ENCODE measurements at regions of chr6 and their contacts with region 1.

Region 1: DNA sequence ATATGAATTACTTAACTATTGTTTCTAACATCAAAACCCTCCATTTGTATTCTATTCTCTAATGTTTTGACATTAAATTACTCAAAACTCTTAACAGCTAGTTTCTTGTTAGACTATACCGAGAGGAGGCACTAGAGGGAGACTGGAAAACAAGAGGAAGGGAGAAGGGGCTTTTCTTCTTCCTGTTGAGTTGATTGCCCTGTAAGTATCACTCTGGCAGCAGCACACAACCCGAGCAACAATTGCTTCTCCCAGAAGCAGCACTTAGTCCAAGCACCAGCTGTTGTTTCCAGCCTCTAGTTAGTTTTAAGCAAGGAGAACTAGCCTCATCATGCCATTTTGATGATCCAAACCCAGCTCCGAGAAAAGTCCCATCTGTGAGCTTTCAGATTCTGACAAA is 603.8 kb downstream of the PRKN start:
- DNase-seq: peak in 1 of 3 donors; percentile 35
- H3K4me3 ChIP-seq: no peak overlapping the region
- H3K4me3 Mint-ChIP-seq: no peak overlapping the region
- H3K27ac ChIP-seq: no peak overlapping the region
- H3K27ac Mint-ChIP-seq: no peak overlapping the region
- H3K4me1 ChIP-seq: peaks cover 12 to 14% of the 10 kb centered on the region in 2 donors
- H3K4me1 Mint-ChIP-seq: peaks cover 12% of the 10 kb centered on the region
- H3K27me3 ChIP-seq: no peaks in the 10 kb centered on the region
- H3K27me3 Mint-ChIP-seq: peaks cover 0 to 1% (median 0%) of the 10 kb centered on the region in 3 donors
- CTCF ChIP-seq: peak; percentile 37

Region 2: GRCh38 chr6:162177746-162178145 is 53.9 kb after region 1 on chr6:
- intact Hi-C with region 1: loop called in 1 of 2 experiments (anchors 10 kb)
- DNase-seq: no peak
- H3K4me3 ChIP-seq: no peak overlapping the region
- H3K4me3 Mint-ChIP-seq: no peak overlapping the region
- H3K27ac ChIP-seq: no peak overlapping the region
- H3K27ac Mint-ChIP-seq: peak overlapping the region in 1 of 7 donors; percentile 43
- H3K4me1 ChIP-seq: peaks cover 33 to 36% of the 10 kb centered on the region in 2 donors
- H3K4me1 Mint-ChIP-seq: peaks cover 34% of the 10 kb centered on the region
- H3K27me3 ChIP-seq: no peaks in the 10 kb centered on the region
- H3K27me3 Mint-ChIP-seq: peaks cover 0 to 1% (median 0%) of the 10 kb centered on the region in 3 donors
- CTCF ChIP-seq: no peak

Region 3: GRCh38 chr6:162198925-162199324 is 75.1 kb after region 1 on chr6:
- intact Hi-C with region 1: no loop called
- DNase-seq: no peak
- H3K4me3 ChIP-seq: no peak overlapping the region
- H3K4me3 Mint-ChIP-seq: no peak overlapping the region
- H3K27ac ChIP-seq: no peak overlapping the region
- H3K27ac Mint-ChIP-seq: no peak overlapping the region
- H3K4me1 ChIP-seq: peaks cover 0 to 3% of the 10 kb centered on the region in 2 donors
- H3K4me1 Mint-ChIP-seq: no peaks in the 10 kb centered on the region
- H3K27me3 ChIP-seq: no peaks in the 10 kb centered on the region
- H3K27me3 Mint-ChIP-seq: peaks cover 0 to 2% (median 0%) of the 10 kb centered on the region in 3 donors
- CTCF ChIP-seq: peak; percentile 8

Region 4: GRCh38 chr6:162230147-162230752 is 106.5 kb after region 1 on chr6:
- intact Hi-C with region 1: no loop called
- DNase-seq: no peak
- H3K4me3 ChIP-seq: no peak overlapping the region
- H3K4me3 Mint-ChIP-seq: no peak overlapping the region
- H3K27ac ChIP-seq: no peak overlapping the region
- H3K27ac Mint-ChIP-seq: no peak overlapping the region
- H3K4me1 ChIP-seq: no peaks in the 10 kb centered on the region
- H3K4me1 Mint-ChIP-seq: no peaks in the 10 kb centered on the region
- H3K27me3 ChIP-seq: no peaks in the 10 kb centered on the region
- H3K27me3 Mint-ChIP-seq: peaks cover 0 to 2% (median 1%) of the 10 kb centered on the region in 3 donors
- CTCF ChIP-seq: no peak

Measured in CD14-positive monocyte (primary cell).